Endothelial cell of umbilical vein (primary cell): ENCODE measurements at regions of chr11 and their contacts with region 1.

Region 1: GRCh38 chr11:60964801-60965200 is 6.7 kb upstream of the CD6 start:
- DNase-seq: no peak
- H3K4me3 ChIP-seq: no peak overlapping the region
- H3K27ac ChIP-seq: no peak overlapping the region
- H3K4me1 ChIP-seq: no peaks in the 10 kb centered on the region
- H3K27me3 ChIP-seq: peaks cover 9 to 28% of the 10 kb centered on the region in 2 experiments
- CTCF ChIP-seq: no peak
- POLR2A ChIP-seq: no peak

Region 2: DNA sequence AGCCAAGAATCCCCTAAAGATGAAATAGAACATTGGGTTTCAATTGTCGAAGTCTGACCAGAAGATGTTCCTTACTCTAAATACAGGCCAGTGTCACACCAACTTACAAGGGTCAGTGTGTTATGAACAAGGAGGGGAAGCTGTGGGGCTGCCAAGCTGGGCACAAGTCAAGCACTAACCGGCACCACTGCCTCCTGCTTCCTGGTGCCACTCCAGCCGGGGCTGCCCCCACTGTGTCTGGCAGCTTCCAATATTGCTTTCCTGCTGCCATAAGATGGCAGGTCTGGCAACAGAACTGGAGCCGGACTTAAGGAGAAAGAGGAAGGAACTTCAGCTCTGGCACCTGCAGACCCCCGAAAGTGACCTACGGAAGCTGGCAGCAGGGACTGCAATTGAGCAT is 210.1 kb after region 1 on chr11:
- CTCF ChIA-PET with region 1: interaction called, 6 read pairs
- POLR2A ChIA-PET with region 1: no interaction called
- dilution Hi-C with region 1: no loop called
- intact Hi-C with region 1: loop called (anchors 5 kb)
- DNase-seq: no peak
- H3K4me3 ChIP-seq: no peak overlapping the region
- H3K27ac ChIP-seq: no peak overlapping the region
- H3K4me1 ChIP-seq: no peaks in the 10 kb centered on the region
- H3K27me3 ChIP-seq: peaks cover 5 to 16% of the 10 kb centered on the region in 2 experiments
- CTCF ChIP-seq: no peak
- POLR2A ChIP-seq: no peak